Stomach (tissue), 19 donors: ENCODE measurements at regions of chr17 and their contacts with region 1.

Region 1: DNA sequence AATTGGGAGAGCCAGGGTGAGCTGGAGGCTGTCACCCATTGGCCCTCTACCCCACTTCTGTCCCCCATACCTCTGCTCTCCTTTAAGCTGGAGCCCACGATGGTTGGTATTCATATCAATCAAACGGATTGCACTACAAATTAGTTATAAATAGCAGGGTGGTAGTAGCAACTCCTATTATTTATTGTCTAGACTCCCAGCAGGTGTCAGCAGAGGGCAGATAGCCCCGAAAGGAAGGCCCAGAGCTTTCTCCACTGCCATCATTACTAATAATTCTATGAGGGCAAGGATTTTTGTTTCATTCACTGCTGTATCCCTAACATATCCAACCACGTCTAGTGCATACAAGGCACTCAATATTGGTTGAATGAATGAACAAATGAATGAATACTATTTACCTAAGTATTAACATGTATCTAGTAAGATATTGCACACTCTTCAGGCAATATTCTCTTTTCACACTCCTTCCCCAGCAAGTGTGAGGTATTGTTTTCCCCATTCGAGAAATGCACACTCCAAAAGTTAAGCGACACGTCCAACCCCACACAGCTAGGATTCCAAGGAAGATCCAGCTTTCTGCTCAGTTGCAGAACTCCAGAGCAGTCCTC is 6.3 kb downstream of the C17orf50 start:
- DNase-seq: peak; percentile 59 to 77
- H3K4me3 ChIP-seq: no peak overlapping the region
- H3K27ac ChIP-seq: no peak overlapping the region
- H3K4me1 ChIP-seq: peaks cover 10 to 43% (median 25%) of the 10 kb centered on the region in 4 donors
- H3K27me3 ChIP-seq: no peaks in the 10 kb centered on the region
- CTCF ChIP-seq: peak in 5 of 7 experiments; percentile 32 to 71 (median 35)
- EP300 ChIP-seq: no peak
- POLR2A ChIP-seq: no peak

Region 2: GRCh38 chr17:35630530-35631148 is 136.4 kb before region 1 on chr17:
- intact Hi-C with region 1: no loop called
- DNase-seq: no peak
- H3K4me3 ChIP-seq: no peak overlapping the region
- H3K27ac ChIP-seq: no peak overlapping the region
- H3K4me1 ChIP-seq: peaks cover 0 to 11% (median 0%) of the 10 kb centered on the region in 4 donors
- H3K27me3 ChIP-seq: no peaks in the 10 kb centered on the region
- CTCF ChIP-seq: no peak
- EP300 ChIP-seq: no peak
- POLR2A ChIP-seq: no peak

Region 3: GRCh38 chr17:35808962-35809854 is 42.2 kb after region 1 on chr17 and contains the start of gene TAF15:
- intact Hi-C with region 1: loop called (anchors 5 kb)
- DNase-seq: peak; percentile 96 to 99
- H3K4me3 ChIP-seq: peak within 1 kb of the TSS; percentile 79 to 96 (median 88)
- H3K27ac ChIP-seq: peak within 1 kb of the TSS; percentile 93 to 98 (median 96)
- H3K4me1 ChIP-seq: peaks cover 18 to 62% (median 44%) of the 10 kb centered on the region in 4 donors
- H3K27me3 ChIP-seq: no peaks in the 10 kb centered on the region
- CTCF ChIP-seq: peak in 5 of 7 experiments; percentile 64 to 85 (median 76)
- EP300 ChIP-seq: no peak
- POLR2A ChIP-seq: peak in 2 of 4 donors; percentile 87 to 96
- total RNA-seq, gene TAF15: 21.1 to 127 (median 60.1) TPM